ENCODE measurements at regions of chr6 and their contacts with region 1.

Region 1: DNA sequence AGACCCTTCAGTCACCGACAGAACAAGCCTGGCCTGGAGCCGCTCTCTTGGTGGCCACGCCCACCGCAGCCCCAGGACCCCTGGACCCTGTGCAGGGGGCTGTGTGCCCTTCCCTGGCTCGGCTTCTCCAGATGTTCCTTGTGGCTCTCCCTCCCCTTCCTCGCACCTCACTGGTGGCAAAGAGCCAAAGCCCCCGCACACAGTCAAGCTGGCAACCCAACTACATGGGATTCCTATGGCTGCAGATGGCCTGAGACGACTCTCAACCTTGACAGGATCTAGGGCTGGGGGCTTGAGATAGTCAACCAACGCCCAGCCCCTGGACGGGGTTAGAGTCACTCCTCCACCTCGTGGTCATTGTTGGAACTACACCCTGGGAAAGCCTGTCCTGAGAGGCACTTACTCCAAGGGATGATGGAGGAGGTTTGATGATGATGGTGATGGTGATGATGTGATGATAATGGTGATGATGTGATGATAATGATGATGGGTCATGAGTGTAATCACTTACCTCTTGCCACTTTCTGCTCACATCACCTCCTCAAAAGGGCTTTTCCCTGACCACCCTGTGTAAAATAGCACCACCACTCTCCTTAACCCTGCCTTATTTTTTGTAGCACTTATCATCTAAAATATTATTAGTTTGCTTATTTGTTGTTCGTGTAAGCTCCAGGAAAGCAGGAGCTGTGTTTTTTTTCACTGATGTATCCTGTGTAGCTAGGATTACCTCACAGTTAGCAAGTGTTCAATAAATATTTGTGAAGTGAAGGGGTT is 278.4 kb downstream of the LRFN2 start:
- DNase-seq: peak; percentile 64
- H3K4me3 ChIP-seq: no peak overlapping the region
- H3K27ac ChIP-seq: no peak overlapping the region
- H3K4me1 ChIP-seq: peaks cover 0 to 4% (median 0%) of the 10 kb centered on the region in 4 donors
- H3K27me3 ChIP-seq: peaks cover 17% of the 10 kb centered on the region
- CTCF ChIP-seq: peak; percentile 90 to 95 (median 92)
- EP300 ChIP-seq: no peak
- POLR2A ChIP-seq: no peak

Region 2: GRCh38 chr6:39865011-39865888 is 443.5 kb before region 1 on chr6:
- in situ Hi-C with region 1: loop called in 2 of 4 experiments (anchors 25 kb)
- intact Hi-C with region 1: no loop called
- DNase-seq: peak; percentile 82
- H3K4me3 ChIP-seq: no peak overlapping the region
- H3K27ac ChIP-seq: no peak overlapping the region
- H3K4me1 ChIP-seq: no peaks in the 10 kb centered on the region
- H3K27me3 ChIP-seq: no peaks in the 10 kb centered on the region
- CTCF ChIP-seq: peak; percentile 67 to 85 (median 78)
- EP300 ChIP-seq: no peak
- POLR2A ChIP-seq: no peak

Region 3: DNA sequence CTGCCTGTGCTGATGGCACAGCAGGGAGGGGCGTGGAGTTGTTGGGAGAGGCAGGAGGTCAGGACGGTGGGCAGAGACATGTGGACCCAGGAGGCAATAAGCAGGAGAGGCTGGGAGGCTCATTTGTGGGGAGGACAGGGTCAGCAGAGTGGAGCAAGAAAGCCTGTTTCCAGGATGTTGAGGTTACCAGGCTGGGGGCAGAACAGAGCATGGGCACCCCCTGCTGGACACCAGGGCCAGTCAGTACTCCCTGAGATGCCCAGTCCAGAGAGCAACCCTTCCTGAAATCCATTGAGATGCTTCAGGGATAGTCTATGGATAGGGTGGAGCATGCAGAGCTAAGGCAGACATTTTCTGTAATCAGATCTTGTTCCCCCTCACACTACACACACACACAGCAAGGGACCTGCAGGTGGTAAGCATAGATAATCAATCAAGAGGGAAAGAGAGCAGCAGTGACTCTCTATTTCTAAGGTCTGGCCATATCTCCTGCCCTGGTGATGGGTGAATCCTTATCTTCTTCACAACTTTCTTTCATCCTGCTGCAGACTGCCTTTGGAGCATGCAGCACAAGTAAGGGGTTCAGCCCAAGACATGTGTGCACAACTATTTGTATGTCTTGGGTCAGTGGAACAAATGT is 416.1 kb before region 1 on chr6:
- in situ Hi-C with region 1: loop called in 1 of 4 experiments (anchors 25 kb)
- intact Hi-C with region 1: no loop called
- DNase-seq: peak; percentile 66
- H3K4me3 ChIP-seq: no peak overlapping the region
- H3K27ac ChIP-seq: no peak overlapping the region
- H3K4me1 ChIP-seq: peaks cover 0 to 10% (median 2%) of the 10 kb centered on the region in 4 donors
- H3K27me3 ChIP-seq: no peaks in the 10 kb centered on the region
- CTCF ChIP-seq: peak; percentile 51 to 69 (median 65)
- EP300 ChIP-seq: no peak
- POLR2A ChIP-seq: no peak

Region 4: GRCh38 chr6:39980839-39981580 is 327.7 kb before region 1 on chr6:
- in situ Hi-C with region 1: loop called (anchors 5 to 10 kb)
- intact Hi-C with region 1: loop called (anchors 5 kb)
- DNase-seq: peak; percentile 20
- H3K4me3 ChIP-seq: no peak overlapping the region
- H3K27ac ChIP-seq: peak overlapping the region in 2 of 4 donors; percentile 27 to 52
- H3K4me1 ChIP-seq: peaks cover 0 to 38% (median 4%) of the 10 kb centered on the region in 4 donors
- H3K27me3 ChIP-seq: no peaks in the 10 kb centered on the region
- CTCF ChIP-seq: peak; percentile 47 to 78 (median 48)
- EP300 ChIP-seq: no peak
- POLR2A ChIP-seq: no peak